Mammary epithelial cell (primary cell): ENCODE measurements at regions of chr21 and their contacts with region 1.

Region 1: GRCh38 chr21:35390013-35390776 is 341.1 kb upstream of the RUNX1 start:
- DNase-seq: peak; percentile 88
- H3K4me3 ChIP-seq: no peak overlapping the region
- H3K27ac ChIP-seq: peak overlapping the region; percentile 67
- H3K4me1 ChIP-seq: peaks cover 30% of the 10 kb centered on the region
- H3K27me3 ChIP-seq: no peaks in the 10 kb centered on the region
- CTCF ChIP-seq: no peak

Region 2: GRCh38 chr21:34517491-34518245 is 872.5 kb before region 1 on chr21:
- CTCF ChIA-PET with region 1: no interaction called
- dilution Hi-C with region 1: no loop called
- in situ Hi-C with region 1: no loop called
- intact Hi-C with region 1: no loop called
- DNase-seq: no peak
- H3K4me3 ChIP-seq: no peak overlapping the region
- H3K27ac ChIP-seq: no peak overlapping the region
- H3K4me1 ChIP-seq: no peaks in the 10 kb centered on the region
- H3K27me3 ChIP-seq: no peaks in the 10 kb centered on the region
- CTCF ChIP-seq: peak; percentile 39 to 55

Region 3: GRCh38 chr21:34897828-34898227 is 492.4 kb before region 1 on chr21:
- CTCF ChIA-PET with region 1: no interaction called
- dilution Hi-C with region 1: no loop called
- in situ Hi-C with region 1: loop called in 1 of 2 experiments (anchors 5 kb)
- intact Hi-C with region 1: no loop called
- DNase-seq: no peak
- H3K4me3 ChIP-seq: no peak overlapping the region
- H3K27ac ChIP-seq: no peak overlapping the region
- H3K4me1 ChIP-seq: no peaks in the 10 kb centered on the region
- H3K27me3 ChIP-seq: no peaks in the 10 kb centered on the region
- CTCF ChIP-seq: no peak